Mammary epithelial cell (primary cell): ENCODE measurements at regions of chr6 and their contacts with region 1.

Region 1: DNA sequence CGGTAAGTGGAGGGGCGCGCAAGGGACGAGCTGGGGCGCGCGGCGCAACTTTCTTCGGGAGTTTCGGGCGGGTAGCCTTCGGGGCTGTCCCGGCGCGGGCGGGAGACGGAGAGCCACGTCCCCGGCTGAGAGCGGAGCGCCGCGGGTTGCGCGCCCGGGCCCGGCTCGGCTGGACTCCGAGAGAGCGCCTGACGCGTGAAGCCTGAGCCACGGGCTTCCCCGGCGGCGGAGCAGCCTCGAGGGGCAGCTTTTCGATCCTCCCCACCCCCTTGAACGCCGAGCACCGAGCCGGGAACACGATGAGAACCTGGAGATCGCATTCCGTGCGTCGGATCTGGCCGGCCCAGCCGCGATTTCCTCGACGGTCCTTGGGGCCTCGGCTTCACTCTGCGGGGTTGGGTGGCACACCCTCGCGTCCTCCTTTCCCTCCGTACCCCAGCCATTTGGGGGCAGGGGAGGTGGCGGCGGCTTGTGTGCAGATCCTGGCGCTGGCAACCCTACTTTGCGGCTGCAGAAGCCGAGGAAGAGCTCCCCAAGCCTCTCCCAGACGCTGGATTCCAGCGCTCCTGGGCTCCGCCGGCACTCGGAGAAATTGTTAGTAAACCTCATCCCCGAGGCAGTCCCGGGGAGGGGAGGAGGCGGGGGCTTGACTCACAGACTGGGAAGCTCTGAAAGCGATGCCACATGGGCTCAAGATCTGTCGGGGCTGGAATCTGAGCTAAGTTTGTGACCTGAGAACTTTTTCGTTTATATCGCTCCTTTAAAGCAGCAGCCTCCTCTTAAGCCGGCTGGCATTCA is 572 bp downstream of the DSE start:
- DNase-seq: peak; percentile 92
- H3K4me3 ChIP-seq: peak overlapping the region; percentile 83 to 93 (median 90)
- H3K27ac ChIP-seq: peak overlapping the region; percentile 96
- H3K4me1 ChIP-seq: peaks cover 51% of the 10 kb centered on the region
- H3K27me3 ChIP-seq: no peaks in the 10 kb centered on the region
- CTCF ChIP-seq: no peak

Region 2: GRCh38 chr6:115729036-115729435 is 642.3 kb before region 1 on chr6:
- CTCF ChIA-PET with region 1: no interaction called
- dilution Hi-C with region 1: no loop called
- in situ Hi-C with region 1: no loop called
- intact Hi-C with region 1: no loop called
- DNase-seq: peak; percentile 5
- H3K4me3 ChIP-seq: no peak overlapping the region
- H3K27ac ChIP-seq: no peak overlapping the region
- H3K4me1 ChIP-seq: no peaks in the 10 kb centered on the region
- H3K27me3 ChIP-seq: no peaks in the 10 kb centered on the region
- CTCF ChIP-seq: no peak

Region 3: GRCh38 chr6:116279260-116280063 is 91.9 kb before region 1 on chr6 and contains the start of gene TSPYL1:
- CTCF ChIA-PET with region 1: no interaction called
- dilution Hi-C with region 1: no loop called
- in situ Hi-C with region 1: loop called in 1 of 2 experiments (anchors 5 kb)
- intact Hi-C with region 1: no loop called
- DNase-seq: peak; percentile 96
- H3K4me3 ChIP-seq: peak within 1 kb of the TSS; percentile 67 to 95 (median 76)
- H3K27ac ChIP-seq: peak within 1 kb of the TSS; percentile 95
- H3K4me1 ChIP-seq: peaks cover 11% of the 10 kb centered on the region
- H3K27me3 ChIP-seq: no peaks in the 10 kb centered on the region
- CTCF ChIP-seq: no peak
- total RNA-seq, gene TSPYL1: 103 to 167 TPM

Region 4: GRCh38 chr6:116387374-116387773 is 16.1 kb after region 1 on chr6:
- CTCF ChIA-PET with region 1: no interaction called
- dilution Hi-C with region 1: no loop called
- in situ Hi-C with region 1: no loop called
- intact Hi-C with region 1: loop called (anchors 1 kb)
- DNase-seq: peak; percentile 96
- H3K4me3 ChIP-seq: peak overlapping the region in 1 of 3 experiments; percentile 35
- H3K27ac ChIP-seq: peak overlapping the region; percentile 100
- H3K4me1 ChIP-seq: peaks cover 66% of the 10 kb centered on the region
- H3K27me3 ChIP-seq: no peaks in the 10 kb centered on the region
- CTCF ChIP-seq: no peak

Region 5: GRCh38 chr6:116398316-116399010 is 27.1 kb after region 1 on chr6:
- CTCF ChIA-PET with region 1: no interaction called
- dilution Hi-C with region 1: no loop called
- in situ Hi-C with region 1: no loop called
- intact Hi-C with region 1: loop called (anchors 2 kb)
- DNase-seq: peak; percentile 73
- H3K4me3 ChIP-seq: peak overlapping the region in 1 of 3 experiments; percentile 9
- H3K27ac ChIP-seq: peak overlapping the region; percentile 75
- H3K4me1 ChIP-seq: peaks cover 36% of the 10 kb centered on the region
- H3K27me3 ChIP-seq: no peaks in the 10 kb centered on the region
- CTCF ChIP-seq: no peak

Region 6: DNA sequence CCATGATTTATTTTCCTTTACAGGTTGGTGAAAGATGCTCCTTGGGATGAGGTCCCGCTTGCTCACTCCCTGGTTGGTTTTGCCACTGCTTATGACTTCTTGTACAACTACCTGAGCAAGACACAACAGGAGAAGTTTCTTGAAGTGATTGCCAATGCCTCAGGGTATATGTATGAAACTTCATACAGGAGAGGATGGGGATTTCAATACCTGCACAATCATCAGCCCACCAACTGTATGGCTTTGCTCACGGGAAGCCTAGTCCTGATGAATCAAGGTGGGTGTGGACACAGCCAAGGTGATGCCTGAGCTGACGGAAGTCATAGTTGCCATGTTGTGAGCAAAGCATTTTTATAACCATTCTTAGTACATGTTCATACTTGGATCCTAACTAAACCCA is 55.2 kb after region 1 on chr6:
- CTCF ChIA-PET with region 1: no interaction called
- dilution Hi-C with region 1: no loop called
- in situ Hi-C with region 1: no loop called
- intact Hi-C with region 1: loop called (anchors 2 kb)
- DNase-seq: peak; percentile 92
- H3K4me3 ChIP-seq: no peak overlapping the region
- H3K27ac ChIP-seq: peak overlapping the region; percentile 85
- H3K4me1 ChIP-seq: peaks cover 14% of the 10 kb centered on the region
- H3K27me3 ChIP-seq: no peaks in the 10 kb centered on the region
- CTCF ChIP-seq: no peak